Activated B cell treated with CpG ODN at 0.5 μM for 24 hours (primary cell): ENCODE measurements at regions of chr22 and their contacts with region 1.

Region 1: GRCh38 chr22:22156716-22157347 is 87.8 kb upstream of the VPREB1 start:
- DNase-seq: peak; percentile 64
- ATAC-seq: peak; percentile 75
- H3K4me3 Mint-ChIP-seq: peak overlapping the region; percentile 78
- H3K27ac Mint-ChIP-seq: peak overlapping the region; percentile 98
- H3K4me1 Mint-ChIP-seq: peaks cover 52% of the 10 kb centered on the region
- H3K27me3 Mint-ChIP-seq: no peaks in the 10 kb centered on the region
- CTCF ChIP-seq: peak; percentile 81

Region 2: DNA sequence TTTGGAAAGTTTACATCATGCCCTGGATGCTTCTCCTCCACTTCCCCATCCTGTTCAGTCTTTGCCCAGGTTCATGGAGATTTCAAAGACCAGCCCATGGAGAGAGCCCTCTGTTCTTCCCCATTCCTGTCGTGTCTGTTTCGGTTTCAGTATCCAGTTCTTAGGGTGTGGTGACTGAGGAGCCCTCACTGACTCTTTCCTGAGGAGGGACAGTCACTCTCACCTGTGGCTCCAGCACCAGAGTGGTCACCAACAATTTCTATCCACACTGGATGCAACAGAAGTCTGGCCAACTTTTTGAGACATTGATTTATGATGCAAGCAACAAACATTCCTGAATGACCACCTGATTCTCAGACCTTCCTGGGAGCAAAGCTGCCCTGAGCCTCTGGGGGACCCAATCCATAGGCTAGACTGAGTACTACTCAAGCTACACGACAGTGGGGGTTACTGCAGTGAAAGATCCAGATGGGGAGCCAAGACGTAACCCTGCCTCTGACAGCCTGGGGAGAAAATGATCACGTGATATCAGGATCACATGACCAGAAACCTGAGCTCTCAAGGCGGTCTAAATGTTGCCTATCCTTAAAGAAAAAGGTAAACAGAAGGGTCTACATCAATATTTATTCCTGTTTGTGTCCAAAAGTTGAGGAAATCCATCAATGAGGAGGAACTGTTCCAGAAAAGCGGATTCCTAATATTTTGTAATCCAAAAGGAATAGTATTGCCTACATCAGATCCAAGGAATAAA is 11.5 kb after region 1 on chr22:
- CTCF ChIA-PET with region 1: interaction called, 43 read pairs
- POLR2A ChIA-PET with region 1: interaction called, 44 read pairs
- intact Hi-C with region 1: loop called (anchors 1 kb)
- DNase-seq: peak; percentile 31
- ATAC-seq: peak; percentile 54
- H3K4me3 Mint-ChIP-seq: peak overlapping the region; percentile 84
- H3K27ac Mint-ChIP-seq: peak overlapping the region; percentile 97
- H3K4me1 Mint-ChIP-seq: peaks cover 86% of the 10 kb centered on the region
- H3K27me3 Mint-ChIP-seq: no peaks in the 10 kb centered on the region
- CTCF ChIP-seq: no peak

Region 3: GRCh38 chr22:22195265-22196017 is 38.6 kb after region 1 on chr22:
- CTCF ChIA-PET with region 1: interaction called, 33 read pairs
- POLR2A ChIA-PET with region 1: interaction called, 44 read pairs
- intact Hi-C with region 1: loop called (anchors 1 kb)
- DNase-seq: peak; percentile 79
- ATAC-seq: peak; percentile 71
- H3K4me3 Mint-ChIP-seq: peak overlapping the region; percentile 68
- H3K27ac Mint-ChIP-seq: peak overlapping the region; percentile 85
- H3K4me1 Mint-ChIP-seq: peaks cover 59% of the 10 kb centered on the region
- H3K27me3 Mint-ChIP-seq: no peaks in the 10 kb centered on the region
- CTCF ChIP-seq: peak; percentile 80

Region 4: DNA sequence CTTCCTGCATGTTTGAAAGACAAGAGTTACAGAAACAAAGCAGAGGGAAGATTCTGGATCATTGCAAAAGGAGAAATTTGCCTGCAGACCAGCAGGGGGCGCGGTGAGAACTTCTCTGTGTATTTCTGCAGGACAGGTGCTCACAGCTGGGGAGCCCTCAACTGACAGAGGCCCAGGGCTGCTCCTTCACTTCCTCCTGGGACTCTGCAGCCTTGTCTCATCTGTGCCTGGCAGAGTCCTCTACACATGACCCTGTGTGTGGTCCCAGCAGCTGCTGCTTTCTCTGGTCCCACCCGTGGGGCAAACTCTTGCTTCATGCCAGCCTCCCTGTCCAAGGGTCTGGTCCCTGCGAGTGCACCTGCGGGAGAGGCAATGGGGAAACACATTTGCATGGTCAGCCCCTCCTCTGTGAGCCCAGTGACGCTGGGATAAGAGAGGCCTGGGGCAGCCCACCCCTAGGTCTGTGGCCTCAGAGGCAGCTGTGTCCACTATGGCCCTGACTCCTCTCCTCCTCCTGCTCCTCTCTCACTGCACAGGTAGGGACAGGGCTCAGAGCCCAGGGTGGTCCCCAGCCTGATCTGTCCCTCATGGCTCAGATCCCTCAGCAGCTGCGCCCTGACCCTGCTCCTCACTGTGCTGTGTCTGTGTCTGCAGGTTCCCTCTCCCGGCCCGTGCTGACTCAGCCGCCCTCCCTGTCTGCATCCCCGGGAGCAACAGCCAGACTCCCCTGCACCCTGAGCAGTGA is 44.5 kb after region 1 on chr22:
- CTCF ChIA-PET with region 1: interaction called, 36 read pairs
- POLR2A ChIA-PET with region 1: interaction called, 44 read pairs
- intact Hi-C with region 1: no loop called
- DNase-seq: peak; percentile 58
- ATAC-seq: peak; percentile 65
- H3K4me3 Mint-ChIP-seq: no peak overlapping the region
- H3K27ac Mint-ChIP-seq: peak overlapping the region; percentile 80
- H3K4me1 Mint-ChIP-seq: peaks cover 63% of the 10 kb centered on the region
- H3K27me3 Mint-ChIP-seq: no peaks in the 10 kb centered on the region
- CTCF ChIP-seq: no peak

Region 5: GRCh38 chr22:22235558-22235957 is 78.7 kb after region 1 on chr22:
- CTCF ChIA-PET with region 1: interaction called, 13 read pairs
- POLR2A ChIA-PET with region 1: no interaction called
- intact Hi-C with region 1: loop called (anchors 1 kb)
- DNase-seq: no peak
- ATAC-seq: no peak
- H3K4me3 Mint-ChIP-seq: peak overlapping the region; percentile 38
- H3K27ac Mint-ChIP-seq: no peak overlapping the region
- H3K4me1 Mint-ChIP-seq: peaks cover 25% of the 10 kb centered on the region
- H3K27me3 Mint-ChIP-seq: peaks cover 2% of the 10 kb centered on the region
- CTCF ChIP-seq: no peak

Region 6: GRCh38 chr22:22322792-22323191 is 166.0 kb after region 1 on chr22:
- CTCF ChIA-PET with region 1: interaction called, 5 read pairs
- POLR2A ChIA-PET with region 1: no interaction called
- intact Hi-C with region 1: loop called (anchors 1 kb)
- DNase-seq: no peak
- ATAC-seq: peak; percentile 11
- H3K4me3 Mint-ChIP-seq: peak overlapping the region; percentile 15
- H3K27ac Mint-ChIP-seq: no peak overlapping the region
- H3K4me1 Mint-ChIP-seq: peaks cover 43% of the 10 kb centered on the region
- H3K27me3 Mint-ChIP-seq: no peaks in the 10 kb centered on the region
- CTCF ChIP-seq: no peak